ENCODE measurements at regions of chr7 and their contacts with region 1.

Region 1: DNA sequence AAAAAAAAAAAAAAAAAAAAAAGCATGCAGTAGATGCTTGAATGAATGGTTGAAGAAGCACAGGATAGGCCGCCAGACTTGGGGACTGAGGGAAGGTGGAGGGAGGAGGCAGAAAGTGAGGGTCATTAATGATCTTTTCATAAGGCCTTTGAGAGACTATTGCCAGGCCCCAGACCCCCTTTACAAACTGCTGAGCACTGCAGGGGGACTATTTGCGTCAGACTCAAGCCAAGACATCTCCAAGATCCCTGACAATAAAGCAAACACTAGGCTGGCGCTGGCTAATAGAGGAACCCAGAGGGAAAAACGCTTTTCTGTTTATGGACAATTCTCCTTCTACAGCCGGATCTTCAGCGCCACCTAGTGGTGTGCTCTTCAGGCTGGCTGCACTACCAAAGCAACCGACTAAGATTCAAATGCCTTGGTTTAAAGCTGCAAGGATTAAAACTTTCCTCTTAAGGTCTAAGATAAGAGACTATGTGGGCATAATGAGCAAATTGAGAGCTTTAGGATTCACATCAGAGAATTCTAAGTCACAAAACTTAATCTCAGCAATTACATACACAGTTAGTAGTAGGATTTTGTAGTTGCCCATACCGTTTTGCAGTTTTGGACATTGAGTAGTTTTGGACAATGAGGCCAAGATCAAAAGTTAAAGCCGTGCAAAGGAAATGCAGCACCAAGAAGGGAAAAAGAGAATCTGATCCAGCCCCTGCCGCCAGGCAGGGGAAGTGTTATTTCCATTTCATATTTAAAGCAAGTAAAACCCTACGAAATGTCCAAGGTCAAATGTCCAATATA is 17.9 kb upstream of the AGK start:
- DNase-seq: peak; percentile 48
- ATAC-seq: peak; percentile 89
- H3K4me3 ChIP-seq: no peak overlapping the region
- H3K27ac ChIP-seq: no peak overlapping the region
- H3K4me1 ChIP-seq: no peaks in the 10 kb centered on the region
- H3K27me3 ChIP-seq: peaks cover 13% of the 10 kb centered on the region; the same call in 1 of the 2 replicates
- CTCF ChIP-seq: peak; percentile 73 to 98 (median 96)
- POLR2A ChIP-seq: no peak
- RAD21 ChIP-seq: peak; percentile 89

Region 2: GRCh38 chr7:140924019-140924820 is 609.1 kb before region 1 on chr7:
- CTCF ChIA-PET with region 1: no interaction called
- POLR2A ChIA-PET with region 1: no interaction called
- RAD21 ChIA-PET with region 1: no interaction called
- intact Hi-C with region 1: no loop called
- DNase-seq: peak; percentile 32
- ATAC-seq: peak; percentile 85
- H3K4me3 ChIP-seq: peak overlapping the region; percentile 88
- H3K27ac ChIP-seq: peak overlapping the region; percentile 89
- H3K4me1 ChIP-seq: peaks cover 0 to 14% of the 10 kb centered on the region in 2 experiments; a peak in 3 of 4 replicates
- H3K27me3 ChIP-seq: no peaks in the 10 kb centered on the region
- CTCF ChIP-seq: peak in 2 of 3 experiments; percentile 50 to 57; a peak in 5 of 6 replicates
- POLR2A ChIP-seq: no peak
- RAD21 ChIP-seq: no peak

Region 3: GRCh38 chr7:141262101-141263090 is 271.0 kb before region 1 on chr7:
- CTCF ChIA-PET with region 1: no interaction called
- POLR2A ChIA-PET with region 1: no interaction called
- RAD21 ChIA-PET with region 1: no interaction called
- intact Hi-C with region 1: loop called (anchors 10 kb)
- DNase-seq: no peak
- ATAC-seq: no peak
- H3K4me3 ChIP-seq: no peak overlapping the region
- H3K27ac ChIP-seq: no peak overlapping the region
- H3K4me1 ChIP-seq: no peaks in the 10 kb centered on the region
- H3K27me3 ChIP-seq: peaks cover 13% of the 10 kb centered on the region
- CTCF ChIP-seq: peak; percentile 5 to 42 (median 37); a peak in 4 of 6 replicates
- POLR2A ChIP-seq: no peak
- RAD21 ChIP-seq: no peak; the same call in 1 of the 2 replicates

Region 4: GRCh38 chr7:142231716-142232115 is 698.4 kb after region 1 on chr7:
- CTCF ChIA-PET with region 1: no interaction called
- POLR2A ChIA-PET with region 1: no interaction called
- RAD21 ChIA-PET with region 1: no interaction called
- intact Hi-C with region 1: no loop called
- DNase-seq: peak; percentile 46
- ATAC-seq: peak; percentile 100
- H3K4me3 ChIP-seq: no peak overlapping the region
- H3K27ac ChIP-seq: no peak overlapping the region
- H3K4me1 ChIP-seq: peaks cover 4 to 8% of the 10 kb centered on the region in 2 experiments; a peak in 3 of 4 replicates
- H3K27me3 ChIP-seq: peaks cover 8% of the 10 kb centered on the region; the same call in 1 of the 2 replicates
- CTCF ChIP-seq: peak in 2 of 3 experiments; percentile 53 to 59; a peak in 4 of 6 replicates
- POLR2A ChIP-seq: no peak
- RAD21 ChIP-seq: peak; percentile 33; the same call in 1 of the 2 replicates

Measured in HCT116 (cell line).